ENCODE measurements at regions of chr1 and their contacts with region 1.

Region 1: GRCh38 chr1:150561974-150562445 is 12.8 kb downstream of the ADAMTSL4 start:
- DNase-seq: peak; percentile 67 to 89 (median 83)
- ATAC-seq: peak; percentile 58
- H3K4me3 ChIP-seq: peak overlapping the region; percentile 95
- H3K4me3 Mint-ChIP-seq: peak overlapping the region; percentile 87 to 99 (median 97)
- H3K27ac ChIP-seq: peak overlapping the region; percentile 97
- H3K27ac Mint-ChIP-seq: peak overlapping the region; percentile 94 to 100 (median 98)
- H3K4me1 ChIP-seq: peaks cover 47 to 57% of the 10 kb centered on the region in 2 donors
- H3K4me1 Mint-ChIP-seq: peaks cover 26 to 59% (median 51%) of the 10 kb centered on the region in 7 donors
- H3K27me3 ChIP-seq: no peaks in the 10 kb centered on the region
- H3K27me3 Mint-ChIP-seq: no peaks in the 10 kb centered on the region

Region 2: GRCh38 chr1:150363426-150364230 is 198.4 kb before region 1 on chr1 and contains the start of gene RPRD2:
- CTCF ChIA-PET with region 1: no interaction called
- POLR2A ChIA-PET with region 1: interaction called, 15 read pairs
- intact Hi-C with region 1: loop called in 1 of 2 experiments (anchors 10 kb)
- DNase-seq: peak; percentile 83 to 100 (median 99)
- ATAC-seq: peak; percentile 97
- H3K4me3 ChIP-seq: peak within 1 kb of the TSS; percentile 99
- H3K4me3 Mint-ChIP-seq: peak within 1 kb of the TSS; percentile 86 to 100 (median 98)
- H3K27ac ChIP-seq: peak within 1 kb of the TSS; percentile 84
- H3K27ac Mint-ChIP-seq: peak within 1 kb of the TSS; percentile 95 to 100 (median 98)
- H3K4me1 ChIP-seq: peaks cover 10% of the 10 kb centered on the region in 2 donors
- H3K4me1 Mint-ChIP-seq: peaks cover 25 to 37% (median 32%) of the 10 kb centered on the region in 7 donors
- H3K27me3 ChIP-seq: no peaks in the 10 kb centered on the region
- H3K27me3 Mint-ChIP-seq: peaks cover 0 to 2% (median 0%) of the 10 kb centered on the region in 5 donors
- total RNA-seq, gene RPRD2: 33.2 to 62.2 (median 40.6) TPM

Region 3: GRCh38 chr1:150515328-150516048 is 46.5 kb before region 1 on chr1 and contains the start of gene FALEC:
- CTCF ChIA-PET with region 1: interaction called, 5 read pairs
- POLR2A ChIA-PET with region 1: interaction called, 4 read pairs
- intact Hi-C with region 1: loop called in 1 of 2 experiments (anchors 1 kb)
- DNase-seq: peak; percentile 81 to 94 (median 86)
- ATAC-seq: peak; percentile 99
- H3K4me3 ChIP-seq: peak within 1 kb of the TSS; percentile 58
- H3K4me3 Mint-ChIP-seq: peak within 1 kb of the TSS; percentile 83 to 94 (median 90)
- H3K27ac ChIP-seq: peak within 1 kb of the TSS; percentile 64
- H3K27ac Mint-ChIP-seq: peak within 1 kb of the TSS; percentile 40 to 87 (median 76)
- H3K4me1 ChIP-seq: peaks cover 0 to 6% of the 10 kb centered on the region in 2 donors
- H3K4me1 Mint-ChIP-seq: peaks cover 9 to 17% (median 10%) of the 10 kb centered on the region in 7 donors
- H3K27me3 ChIP-seq: no peaks in the 10 kb centered on the region
- H3K27me3 Mint-ChIP-seq: no peaks in the 10 kb centered on the region
- total RNA-seq, gene FALEC: 0.44 to 2.5 TPM in 2 of 5 experiments, not detected in the others

Region 4: DNA sequence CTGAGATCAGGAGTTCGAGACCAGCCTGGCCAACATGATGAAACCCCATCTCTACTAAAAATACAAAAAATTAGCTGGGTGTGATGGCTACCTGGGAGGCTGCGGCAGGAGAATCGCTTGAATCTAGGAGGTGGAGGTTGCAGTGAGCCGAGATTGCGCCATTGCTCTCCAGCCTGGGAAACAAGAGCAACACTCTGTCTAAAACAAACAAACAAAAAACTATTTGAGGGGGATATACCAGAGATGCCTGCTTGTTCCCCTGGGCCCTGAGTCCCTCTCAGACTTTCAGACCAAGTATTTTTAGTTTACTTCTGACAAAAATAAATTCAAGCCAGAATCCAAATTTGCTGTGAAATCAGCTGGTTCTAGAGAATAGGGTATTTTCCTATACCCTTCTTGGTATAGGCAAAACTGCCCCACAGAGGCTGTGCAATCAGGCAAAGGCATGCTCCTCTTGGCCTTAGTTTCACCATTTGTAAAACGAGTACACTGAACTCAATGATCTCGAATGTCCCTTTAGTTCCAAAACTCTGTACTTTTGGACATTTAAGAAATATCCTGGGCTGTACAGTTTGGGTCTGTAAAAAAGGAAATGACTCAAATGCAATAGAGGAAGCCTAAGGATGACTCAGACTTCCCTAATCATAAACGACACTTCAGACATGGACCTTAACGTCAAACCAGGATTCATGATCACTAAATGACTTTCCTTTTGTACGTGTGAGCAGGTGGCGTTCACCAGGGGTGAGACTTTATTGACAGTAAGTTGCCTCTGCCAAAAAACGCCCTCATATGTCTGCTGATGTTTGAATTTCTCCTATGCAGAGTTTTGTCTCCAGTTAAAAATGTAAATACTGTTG is 51.3 kb after region 1 on chr1:
- CTCF ChIA-PET with region 1: interaction called, 272 read pairs
- POLR2A ChIA-PET with region 1: interaction called, 254 read pairs
- intact Hi-C with region 1: loop called (anchors 1 to 2 kb)
- DNase-seq: peak in 2 of 9 donors; percentile 47 to 55
- ATAC-seq: peak; percentile 48
- H3K4me3 ChIP-seq: no peak overlapping the region
- H3K4me3 Mint-ChIP-seq: peak overlapping the region in 4 of 10 donors; percentile 21 to 80 (median 54)
- H3K27ac ChIP-seq: no peak overlapping the region
- H3K27ac Mint-ChIP-seq: peak overlapping the region; percentile 29 to 95 (median 88)
- H3K4me1 ChIP-seq: peaks cover 30 to 52% of the 10 kb centered on the region in 2 donors
- H3K4me1 Mint-ChIP-seq: peaks cover 27 to 59% (median 51%) of the 10 kb centered on the region in 7 donors
- H3K27me3 ChIP-seq: no peaks in the 10 kb centered on the region
- H3K27me3 Mint-ChIP-seq: no peaks in the 10 kb centered on the region

Region 5: GRCh38 chr1:150765296-150765976 is 203.4 kb after region 1 on chr1 and contains the start of gene CTSS:
- CTCF ChIA-PET with region 1: interaction called, 3 read pairs
- POLR2A ChIA-PET with region 1: interaction called, 7 read pairs
- intact Hi-C with region 1: loop called in 1 of 2 experiments (anchors 5 kb)
- DNase-seq: peak in 6 of 9 donors; percentile 37 to 55 (median 43)
- ATAC-seq: peak; percentile 86
- H3K4me3 ChIP-seq: peak within 1 kb of the TSS; percentile 60
- H3K4me3 Mint-ChIP-seq: peak within 1 kb of the TSS; percentile 87 to 98 (median 93)
- H3K27ac ChIP-seq: peak within 1 kb of the TSS; percentile 82
- H3K27ac Mint-ChIP-seq: peak within 1 kb of the TSS; percentile 83 to 99 (median 96)
- H3K4me1 ChIP-seq: peaks cover 9 to 15% of the 10 kb centered on the region in 2 donors
- H3K4me1 Mint-ChIP-seq: peaks cover 36 to 68% (median 52%) of the 10 kb centered on the region in 7 donors
- H3K27me3 ChIP-seq: no peaks in the 10 kb centered on the region
- H3K27me3 Mint-ChIP-seq: peaks cover 0 to 8% (median 0%) of the 10 kb centered on the region in 5 donors
- total RNA-seq, gene CTSS: 91.1 to 1,020 (median 106) TPM

Region 6: DNA sequence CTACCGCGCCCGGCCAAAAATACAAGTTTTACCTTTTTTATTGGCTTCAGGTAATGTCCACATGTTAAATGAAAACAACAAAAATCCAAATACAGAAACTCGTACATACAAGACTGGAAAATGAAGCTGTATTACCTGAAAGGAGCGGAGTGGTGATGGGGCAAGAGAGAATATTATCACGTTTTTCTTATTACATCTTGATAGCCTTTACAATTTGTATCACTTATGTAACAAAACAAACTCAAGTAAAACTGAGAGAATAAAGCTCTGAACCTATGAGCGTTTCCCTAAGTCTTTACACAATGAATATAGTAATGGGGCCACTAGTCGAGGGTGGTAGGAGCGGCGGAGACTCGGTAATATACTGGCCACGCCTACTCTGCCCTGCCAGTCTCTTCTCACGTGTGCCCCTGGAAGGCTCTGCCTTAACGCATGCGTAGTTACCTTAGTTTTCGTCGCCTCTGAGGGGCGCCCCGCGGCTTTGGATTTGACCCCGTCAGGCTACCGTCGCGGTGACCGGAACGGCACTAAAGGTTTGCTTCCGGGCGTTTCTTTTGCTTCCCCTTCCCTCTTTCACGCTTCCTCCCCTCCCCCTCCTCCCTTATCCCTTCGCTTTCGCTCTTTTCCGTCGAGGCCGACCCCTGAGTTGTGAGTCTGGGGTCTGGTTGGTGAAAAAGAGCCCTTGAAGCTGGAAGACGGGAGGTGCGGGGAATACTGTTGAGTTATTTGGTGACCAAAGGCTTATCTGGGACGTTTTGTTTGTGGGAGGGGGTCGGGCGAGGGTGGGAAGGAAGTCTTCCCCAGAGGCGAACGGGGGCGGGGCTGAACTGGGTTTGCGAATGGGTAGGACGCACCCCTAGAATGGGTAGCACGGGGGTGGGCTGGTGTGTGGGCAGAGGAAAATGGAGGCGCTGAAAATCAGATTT is 364.1 kb after region 1 on chr1 and contains the start of gene SETDB1:
- CTCF ChIA-PET with region 1: interaction called, 5 read pairs
- POLR2A ChIA-PET with region 1: no interaction called
- intact Hi-C with region 1: loop called (anchors 1 to 5 kb)
- DNase-seq: peak; percentile 69 to 93 (median 90)
- ATAC-seq: peak; percentile 98
- H3K4me3 ChIP-seq: peak within 1 kb of the TSS; percentile 92
- H3K4me3 Mint-ChIP-seq: peak within 1 kb of the TSS; percentile 92 to 97 (median 94)
- H3K27ac ChIP-seq: peak within 1 kb of the TSS; percentile 91
- H3K27ac Mint-ChIP-seq: peak within 1 kb of the TSS; percentile 92 to 99 (median 95)
- H3K4me1 ChIP-seq: peaks cover 0 to 7% of the 10 kb centered on the region in 2 donors
- H3K4me1 Mint-ChIP-seq: peaks cover 15 to 35% (median 27%) of the 10 kb centered on the region in 7 donors
- H3K27me3 ChIP-seq: no peaks in the 10 kb centered on the region
- H3K27me3 Mint-ChIP-seq: no peaks in the 10 kb centered on the region
- total RNA-seq, gene SETDB1: 57.3 to 94.9 (median 61.7) TPM

Region 7: GRCh38 chr1:151059078-151059907 is 497.3 kb after region 1 on chr1 and contains the start of gene CDC42SE1:
- CTCF ChIA-PET with region 1: no interaction called
- POLR2A ChIA-PET with region 1: interaction called, 3 read pairs
- intact Hi-C with region 1: loop called (anchors 5 kb)
- DNase-seq: peak; percentile 76 to 85 (median 82)
- ATAC-seq: peak; percentile 84
- H3K4me3 ChIP-seq: peak within 1 kb of the TSS; percentile 82
- H3K4me3 Mint-ChIP-seq: peak within 1 kb of the TSS; percentile 95 to 100 (median 99)
- H3K27ac ChIP-seq: peak within 1 kb of the TSS; percentile 99
- H3K27ac Mint-ChIP-seq: peak within 1 kb of the TSS; percentile 93 to 99 (median 95)
- H3K4me1 ChIP-seq: peaks cover 11 to 26% of the 10 kb centered on the region in 2 donors
- H3K4me1 Mint-ChIP-seq: peaks cover 35 to 55% (median 41%) of the 10 kb centered on the region in 7 donors
- H3K27me3 ChIP-seq: no peaks in the 10 kb centered on the region
- H3K27me3 Mint-ChIP-seq: no peaks in the 10 kb centered on the region
- total RNA-seq, gene CDC42SE1: 362 to 516 (median 425) TPM

Measured in naive thymus-derived CD4-positive, alpha-beta T cell (primary cell).